CD8-positive, alpha-beta T cell (primary cell): ENCODE measurements at regions of chr14 and their contacts with region 1.

Region 1: GRCh38 chr14:77053046-77053841 is 24.7 kb upstream of the IRF2BPL start:
- DNase-seq: peak; percentile 51 to 89 (median 82)
- ATAC-seq: peak; percentile 90
- H3K4me3 ChIP-seq: no peak overlapping the region
- H3K4me3 Mint-ChIP-seq: no peak overlapping the region
- H3K27ac ChIP-seq: no peak overlapping the region
- H3K27ac Mint-ChIP-seq: peak overlapping the region; percentile 22
- H3K4me1 ChIP-seq: peaks cover 10% of the 10 kb centered on the region
- H3K4me1 Mint-ChIP-seq: peaks cover 6% of the 10 kb centered on the region
- H3K27me3 ChIP-seq: no peaks in the 10 kb centered on the region
- H3K27me3 Mint-ChIP-seq: no peaks in the 10 kb centered on the region
- CTCF ChIP-seq: peak; percentile 98

Region 2: DNA sequence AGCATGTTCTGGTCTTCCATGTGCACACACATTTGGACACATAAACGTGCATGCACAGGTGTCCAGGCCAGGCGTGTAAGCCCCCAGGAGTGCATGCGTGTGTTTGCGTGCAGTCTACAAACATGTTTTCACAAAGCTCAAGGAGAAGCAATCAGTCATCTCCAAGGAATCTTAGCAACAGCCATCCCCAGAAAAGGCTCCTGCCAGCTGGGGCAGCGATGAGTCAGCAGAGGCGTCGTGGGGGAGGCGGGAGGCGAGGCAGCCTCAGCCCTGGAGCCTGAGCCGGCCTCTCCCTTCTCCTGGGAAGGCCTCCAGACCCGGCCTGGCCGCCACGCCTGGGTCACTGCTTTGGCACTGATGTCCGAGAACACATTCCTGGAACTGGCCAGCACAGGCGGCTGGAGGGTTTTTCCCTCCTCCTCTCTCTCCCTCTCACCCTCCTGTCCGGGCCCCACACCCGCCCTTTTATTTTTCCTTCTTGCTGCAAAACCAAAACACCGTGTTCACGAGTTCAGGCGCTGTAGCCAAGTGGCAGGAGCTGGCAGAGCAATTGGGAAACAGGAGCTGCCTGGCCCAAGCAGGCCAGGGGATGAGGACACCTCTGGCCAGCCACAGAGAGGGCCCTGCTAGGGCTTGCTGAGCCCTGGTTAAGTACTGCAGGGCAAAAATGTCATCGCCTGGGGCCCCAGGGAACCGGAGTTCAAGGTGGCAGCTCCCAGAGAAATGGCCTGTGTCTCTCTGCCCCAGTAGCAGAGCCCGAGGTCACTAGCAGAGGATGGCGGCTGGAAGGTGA is 134.3 kb before region 1 on chr14:
- CTCF ChIA-PET with region 1: interaction called, 156 read pairs
- POLR2A ChIA-PET with region 1: no interaction called
- intact Hi-C with region 1: no loop called
- DNase-seq: no peak
- ATAC-seq: no peak
- H3K4me3 ChIP-seq: no peak overlapping the region
- H3K4me3 Mint-ChIP-seq: no peak overlapping the region
- H3K27ac ChIP-seq: no peak overlapping the region
- H3K27ac Mint-ChIP-seq: no peak overlapping the region
- H3K4me1 ChIP-seq: peaks cover 17% of the 10 kb centered on the region
- H3K4me1 Mint-ChIP-seq: peaks cover 29% of the 10 kb centered on the region
- H3K27me3 ChIP-seq: no peaks in the 10 kb centered on the region
- H3K27me3 Mint-ChIP-seq: no peaks in the 10 kb centered on the region
- CTCF ChIP-seq: no peak

Region 3: DNA sequence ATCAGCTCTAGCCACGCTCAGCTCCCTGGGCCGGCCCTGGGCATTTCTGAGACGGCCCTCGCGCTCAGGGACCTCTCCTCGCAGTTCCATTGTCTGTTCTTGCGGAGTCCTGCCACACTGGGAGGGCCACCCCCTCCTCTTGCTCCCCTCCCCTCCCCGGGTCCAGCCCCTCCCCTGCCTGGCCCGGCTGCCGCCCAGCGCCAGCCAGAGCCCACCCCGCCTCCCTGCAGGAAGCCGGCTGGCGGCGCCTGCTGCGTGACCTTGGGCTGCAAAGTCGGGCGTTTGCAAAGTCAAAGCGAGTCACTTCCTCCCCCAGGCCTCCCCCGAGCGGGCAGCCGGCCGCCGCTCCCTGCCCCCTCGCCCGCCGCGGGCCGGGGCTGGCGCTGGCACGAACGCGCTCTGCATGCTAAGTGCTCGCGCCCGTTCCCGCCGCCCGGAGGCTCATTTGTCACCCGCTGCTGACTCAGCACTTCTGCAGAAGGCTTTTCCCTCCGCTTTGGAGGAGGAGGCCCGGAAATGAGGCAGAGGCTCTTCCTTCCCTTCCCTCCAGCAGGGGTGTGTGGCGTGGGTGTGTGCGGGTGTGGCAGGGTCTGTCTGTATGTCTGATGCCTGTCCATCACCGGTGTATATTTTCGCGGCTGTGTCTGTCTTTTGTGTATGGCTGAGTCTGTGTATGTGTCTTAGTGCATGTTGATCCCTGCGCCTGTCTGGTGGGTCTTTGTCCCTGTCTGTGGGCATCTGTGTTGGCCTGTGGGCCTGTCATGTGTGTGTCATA is 96.7 kb before region 1 on chr14:
- CTCF ChIA-PET with region 1: interaction called, 27 read pairs
- POLR2A ChIA-PET with region 1: no interaction called
- intact Hi-C with region 1: no loop called
- DNase-seq: peak; percentile 70 to 95 (median 85)
- ATAC-seq: peak; percentile 63
- H3K4me3 ChIP-seq: peak overlapping the region; percentile 62 to 74
- H3K4me3 Mint-ChIP-seq: peak overlapping the region; percentile 84
- H3K27ac ChIP-seq: peak overlapping the region; percentile 93 to 95
- H3K27ac Mint-ChIP-seq: peak overlapping the region; percentile 97
- H3K4me1 ChIP-seq: peaks cover 52% of the 10 kb centered on the region
- H3K4me1 Mint-ChIP-seq: peaks cover 61% of the 10 kb centered on the region
- H3K27me3 ChIP-seq: no peaks in the 10 kb centered on the region
- H3K27me3 Mint-ChIP-seq: no peaks in the 10 kb centered on the region
- CTCF ChIP-seq: no peak

Region 4: DNA sequence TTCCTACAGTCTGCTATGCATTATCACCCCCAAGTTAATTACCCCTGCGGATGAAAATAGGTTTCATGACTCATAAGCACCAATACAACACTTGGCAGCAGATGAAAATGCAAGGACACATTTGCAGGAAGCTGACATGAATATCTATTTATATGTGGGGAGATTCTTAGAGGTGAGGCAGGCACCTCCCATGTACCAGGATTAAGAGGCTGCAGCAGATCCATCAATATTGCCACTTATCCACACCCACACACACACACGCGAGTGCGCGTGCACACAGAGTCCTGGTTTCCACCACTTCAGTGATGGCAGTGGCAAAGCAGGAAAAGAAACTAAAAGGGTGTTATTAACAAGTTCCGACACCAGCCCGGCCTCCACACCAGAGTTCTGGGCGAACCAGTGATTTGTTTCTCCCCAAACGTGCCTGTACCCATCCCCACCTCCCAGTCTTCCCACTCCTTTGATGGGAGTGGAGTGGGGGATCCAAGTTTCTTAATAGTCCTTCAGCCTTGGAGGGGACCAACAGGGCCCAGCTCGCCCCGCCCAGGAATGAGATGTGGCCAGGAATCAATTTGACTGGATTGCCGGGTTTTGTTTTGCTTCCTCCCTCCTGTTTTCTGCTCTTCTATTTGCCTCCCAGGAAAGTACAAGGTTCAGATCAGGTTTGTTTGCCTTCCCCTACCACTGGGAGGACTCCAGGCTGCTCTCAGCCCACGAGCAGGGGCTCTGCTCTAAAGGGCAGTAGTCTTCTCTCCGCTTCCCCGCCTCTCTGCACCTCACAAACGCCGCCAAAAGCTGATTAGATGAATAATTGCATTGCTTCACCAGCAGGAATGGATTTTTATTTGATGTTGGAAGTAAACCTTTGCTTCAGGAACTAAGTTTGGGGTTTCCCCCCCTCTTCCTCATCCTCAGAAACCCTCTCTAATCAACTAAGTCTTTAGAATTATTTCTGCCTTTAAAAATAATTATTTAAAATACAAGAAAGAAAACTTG is 29.9 kb before region 1 on chr14:
- CTCF ChIA-PET with region 1: interaction called, 13 read pairs
- POLR2A ChIA-PET with region 1: interaction called, 3 read pairs
- intact Hi-C with region 1: loop called (anchors 1 kb)
- DNase-seq: no peak
- ATAC-seq: no peak
- H3K4me3 ChIP-seq: no peak overlapping the region
- H3K4me3 Mint-ChIP-seq: no peak overlapping the region
- H3K27ac ChIP-seq: peak overlapping the region in 1 of 2 experiments; percentile 10
- H3K27ac Mint-ChIP-seq: peak overlapping the region; percentile 14
- H3K4me1 ChIP-seq: peaks cover 38% of the 10 kb centered on the region
- H3K4me1 Mint-ChIP-seq: peaks cover 38% of the 10 kb centered on the region
- H3K27me3 ChIP-seq: no peaks in the 10 kb centered on the region
- H3K27me3 Mint-ChIP-seq: no peaks in the 10 kb centered on the region
- CTCF ChIP-seq: no peak

Region 5: GRCh38 chr14:77033622-77034521 is 19.4 kb before region 1 on chr14:
- CTCF ChIA-PET with region 1: interaction called, 62 read pairs
- POLR2A ChIA-PET with region 1: no interaction called
- intact Hi-C with region 1: loop called in 1 of 2 experiments (anchors 1 kb)
- DNase-seq: peak; percentile 54 to 94 (median 70)
- ATAC-seq: peak; percentile 34
- H3K4me3 ChIP-seq: peak overlapping the region; percentile 40 to 70
- H3K4me3 Mint-ChIP-seq: peak overlapping the region; percentile 86
- H3K27ac ChIP-seq: peak overlapping the region; percentile 67 to 99
- H3K27ac Mint-ChIP-seq: peak overlapping the region; percentile 95
- H3K4me1 ChIP-seq: peaks cover 69% of the 10 kb centered on the region
- H3K4me1 Mint-ChIP-seq: peaks cover 76% of the 10 kb centered on the region
- H3K27me3 ChIP-seq: no peaks in the 10 kb centered on the region
- H3K27me3 Mint-ChIP-seq: no peaks in the 10 kb centered on the region
- CTCF ChIP-seq: no peak

Region 6: GRCh38 chr14:77067632-77068514 is 14.6 kb after region 1 on chr14:
- CTCF ChIA-PET with region 1: interaction called, 53 read pairs
- POLR2A ChIA-PET with region 1: no interaction called
- intact Hi-C with region 1: no loop called
- DNase-seq: peak; percentile 18 to 68 (median 55)
- ATAC-seq: peak; percentile 59
- H3K4me3 ChIP-seq: no peak overlapping the region
- H3K4me3 Mint-ChIP-seq: no peak overlapping the region
- H3K27ac ChIP-seq: no peak overlapping the region
- H3K27ac Mint-ChIP-seq: no peak overlapping the region
- H3K4me1 ChIP-seq: no peaks in the 10 kb centered on the region
- H3K4me1 Mint-ChIP-seq: peaks cover 2% of the 10 kb centered on the region
- H3K27me3 ChIP-seq: no peaks in the 10 kb centered on the region
- H3K27me3 Mint-ChIP-seq: peaks cover 5% of the 10 kb centered on the region
- CTCF ChIP-seq: peak; percentile 65